ENCODE measurements at regions of chr12 and their contacts with region 1.

Region 1: GRCh38 chr12:28951935-28952334 is 197.1 kb upstream of the FAR2 start:
- DNase-seq: no peak
- H3K4me3 ChIP-seq: no peak overlapping the region
- H3K27ac ChIP-seq: no peak overlapping the region
- H3K4me1 ChIP-seq: peaks cover 20% of the 10 kb centered on the region
- H3K27me3 ChIP-seq: no peaks in the 10 kb centered on the region
- CTCF ChIP-seq: no peak
- POLR2A ChIP-seq: no peak

Region 2: GRCh38 chr12:28933864-28934527 is 17.9 kb before region 1 on chr12:
- CTCF ChIA-PET with region 1: interaction called, 4 read pairs
- POLR2A ChIA-PET with region 1: no interaction called
- dilution Hi-C with region 1: no loop called
- intact Hi-C with region 1: loop called (anchors 2 kb)
- DNase-seq: peak; percentile 78
- H3K4me3 ChIP-seq: no peak overlapping the region
- H3K27ac ChIP-seq: peak overlapping the region; percentile 57
- H3K4me1 ChIP-seq: peaks cover 49% of the 10 kb centered on the region
- H3K27me3 ChIP-seq: no peaks in the 10 kb centered on the region
- CTCF ChIP-seq: no peak
- POLR2A ChIP-seq: no peak